Activated T-helper 2 cell treated with anti-CD3 and anti-CD28 coated beads, Interferon-gamma antibody, Interleukin-2, Interleukin-4, amounts not matched to agents 10 μg/mL and 5 μg/mL and 100 μg/mL, durations not matched to agents 14 hours and 24 hours and 36 hours (primary cell): ENCODE measurements at regions of chr5 and their contacts with region 1.

Region 1: GRCh38 chr5:109688971-109689739 is 572 bp upstream of the MAN2A1 start:
- DNase-seq: peak; percentile 74
- H3K4me3 Mint-ChIP-seq: peak overlapping the region; percentile 86
- H3K27ac Mint-ChIP-seq: peak overlapping the region; percentile 91
- H3K4me1 Mint-ChIP-seq: peaks cover 34% of the 10 kb centered on the region
- H3K27me3 Mint-ChIP-seq: peaks cover 6% of the 10 kb centered on the region

Region 2: GRCh38 chr5:108748401-108749127 is 940.6 kb before region 1 on chr5:
- intact Hi-C with region 1: loop called (anchors 2 kb)
- DNase-seq: peak; percentile 96
- H3K4me3 Mint-ChIP-seq: peak overlapping the region; percentile 86
- H3K27ac Mint-ChIP-seq: peak overlapping the region; percentile 84
- H3K4me1 Mint-ChIP-seq: peaks cover 15% of the 10 kb centered on the region
- H3K27me3 Mint-ChIP-seq: peaks cover 27% of the 10 kb centered on the region

Region 3: DNA sequence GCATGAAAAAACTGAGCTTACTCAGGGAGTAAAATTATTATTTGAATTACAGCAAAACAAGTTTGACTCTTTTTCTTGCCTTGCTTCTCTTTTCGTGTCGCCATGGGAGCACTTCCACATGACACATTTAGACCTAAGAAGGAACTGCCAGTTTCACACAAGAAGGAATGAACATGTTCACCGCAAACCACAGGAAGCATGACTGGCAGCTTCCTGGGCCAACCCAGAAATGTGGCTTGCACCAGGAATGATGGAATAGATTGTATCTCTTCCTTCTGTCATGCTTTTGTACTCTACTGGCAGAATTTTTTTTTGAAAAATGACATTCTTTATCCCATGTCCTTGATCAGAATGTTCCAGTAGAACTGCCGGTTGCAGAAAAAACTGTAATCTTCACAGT is 32.3 kb before region 1 on chr5:
- intact Hi-C with region 1: loop called (anchors 2 kb)
- DNase-seq: peak; percentile 13
- H3K4me3 Mint-ChIP-seq: no peak overlapping the region
- H3K27ac Mint-ChIP-seq: no peak overlapping the region
- H3K4me1 Mint-ChIP-seq: peaks cover 21% of the 10 kb centered on the region
- H3K27me3 Mint-ChIP-seq: peaks cover 14% of the 10 kb centered on the region

Region 4: DNA sequence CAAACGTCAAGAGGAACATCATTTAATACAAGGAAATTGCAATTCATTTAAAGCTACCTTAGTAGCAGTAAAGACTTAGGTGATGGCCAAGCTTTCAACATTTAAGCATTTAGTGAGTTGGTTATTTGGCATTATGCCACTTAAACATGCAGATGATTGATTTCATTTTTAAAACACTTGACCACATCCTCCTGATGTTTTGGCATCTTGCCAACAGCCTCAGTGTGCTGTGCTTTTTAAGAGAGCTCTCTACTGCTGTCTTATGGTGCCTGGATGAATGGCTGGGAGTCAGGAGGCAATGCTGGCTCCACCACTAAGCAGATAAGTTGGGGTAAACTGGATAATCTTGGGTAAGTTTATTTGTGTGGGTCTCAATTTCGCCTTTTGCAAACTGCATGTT is 365.1 kb after region 1 on chr5:
- intact Hi-C with region 1: loop called (anchors 2 kb)
- DNase-seq: peak; percentile 68
- H3K4me3 Mint-ChIP-seq: no peak overlapping the region
- H3K27ac Mint-ChIP-seq: peak overlapping the region; percentile 82
- H3K4me1 Mint-ChIP-seq: peaks cover 28% of the 10 kb centered on the region
- H3K27me3 Mint-ChIP-seq: no peaks in the 10 kb centered on the region

Region 5: DNA sequence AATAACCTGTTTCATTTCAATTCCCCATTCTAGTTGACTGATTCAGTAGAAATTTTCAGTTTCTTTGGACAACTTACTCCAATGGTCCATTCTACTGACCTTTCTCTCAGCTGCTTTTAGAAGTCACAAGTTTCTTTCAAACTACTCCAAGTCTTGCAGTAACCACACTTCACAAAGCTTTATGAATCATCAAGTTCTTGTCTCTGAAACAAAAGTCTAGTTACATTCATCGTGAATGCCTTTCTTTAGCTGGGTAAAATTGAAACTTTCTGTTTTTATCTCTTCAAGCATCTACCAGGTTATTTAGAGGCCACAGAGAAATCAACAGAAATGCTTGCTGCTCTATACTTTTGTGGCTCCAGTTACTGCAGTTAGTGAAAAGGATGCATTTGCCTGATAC is 632.0 kb after region 1 on chr5:
- intact Hi-C with region 1: loop called (anchors 5 kb)
- DNase-seq: no peak
- H3K4me3 Mint-ChIP-seq: no peak overlapping the region
- H3K27ac Mint-ChIP-seq: no peak overlapping the region
- H3K4me1 Mint-ChIP-seq: peaks cover 16% of the 10 kb centered on the region
- H3K27me3 Mint-ChIP-seq: no peaks in the 10 kb centered on the region